Caco-2 (cell line): ENCODE measurements at regions of chr13 and their contacts with region 1.

Region 1: GRCh38 chr13:27953676-27954405 is 15.3 kb downstream of the CDX2 start:
- DNase-seq: peak; percentile 88 to 96
- H3K4me3 ChIP-seq: peak overlapping the region; percentile 56
- H3K4me3 Mint-ChIP-seq: peak overlapping the region; percentile 88
- H3K27ac Mint-ChIP-seq: peak overlapping the region; percentile 94
- H3K4me1 ChIP-seq: peaks cover 51% of the 10 kb centered on the region
- H3K4me1 Mint-ChIP-seq: peaks cover 13% of the 10 kb centered on the region
- H3K27me3 ChIP-seq: no peaks in the 10 kb centered on the region
- H3K27me3 Mint-ChIP-seq: no peaks in the 10 kb centered on the region
- CTCF ChIP-seq: peak; percentile 79 to 95

Region 2: GRCh38 chr13:27770809-27771208 is 183.0 kb before region 1 on chr13:
- CTCF ChIA-PET with region 1: interaction called, 11 read pairs
- POLR2A ChIA-PET with region 1: no interaction called
- intact Hi-C with region 1: loop called (anchors 1 kb)
- DNase-seq: peak; percentile 60 to 70
- H3K4me3 ChIP-seq: no peak overlapping the region
- H3K4me3 Mint-ChIP-seq: no peak overlapping the region
- H3K27ac Mint-ChIP-seq: no peak overlapping the region
- H3K4me1 ChIP-seq: no peaks in the 10 kb centered on the region
- H3K4me1 Mint-ChIP-seq: peaks cover 7% of the 10 kb centered on the region
- H3K27me3 ChIP-seq: no peaks in the 10 kb centered on the region
- H3K27me3 Mint-ChIP-seq: peaks cover 2% of the 10 kb centered on the region
- CTCF ChIP-seq: peak; percentile 69 to 85

Region 3: GRCh38 chr13:27868641-27869435 is 85.0 kb before region 1 on chr13:
- CTCF ChIA-PET with region 1: interaction called, 49 read pairs
- POLR2A ChIA-PET with region 1: interaction called, 17 read pairs
- intact Hi-C with region 1: loop called (anchors 1 kb)
- DNase-seq: no peak
- H3K4me3 ChIP-seq: peak overlapping the region; percentile 15; the same call in 1 of the 2 replicates
- H3K4me3 Mint-ChIP-seq: peak overlapping the region; percentile 57
- H3K27ac Mint-ChIP-seq: peak overlapping the region; percentile 86
- H3K4me1 ChIP-seq: peaks cover 35% of the 10 kb centered on the region
- H3K4me1 Mint-ChIP-seq: peaks cover 24% of the 10 kb centered on the region
- H3K27me3 ChIP-seq: no peaks in the 10 kb centered on the region
- H3K27me3 Mint-ChIP-seq: no peaks in the 10 kb centered on the region
- CTCF ChIP-seq: peak; percentile 53 to 62

Region 4: DNA sequence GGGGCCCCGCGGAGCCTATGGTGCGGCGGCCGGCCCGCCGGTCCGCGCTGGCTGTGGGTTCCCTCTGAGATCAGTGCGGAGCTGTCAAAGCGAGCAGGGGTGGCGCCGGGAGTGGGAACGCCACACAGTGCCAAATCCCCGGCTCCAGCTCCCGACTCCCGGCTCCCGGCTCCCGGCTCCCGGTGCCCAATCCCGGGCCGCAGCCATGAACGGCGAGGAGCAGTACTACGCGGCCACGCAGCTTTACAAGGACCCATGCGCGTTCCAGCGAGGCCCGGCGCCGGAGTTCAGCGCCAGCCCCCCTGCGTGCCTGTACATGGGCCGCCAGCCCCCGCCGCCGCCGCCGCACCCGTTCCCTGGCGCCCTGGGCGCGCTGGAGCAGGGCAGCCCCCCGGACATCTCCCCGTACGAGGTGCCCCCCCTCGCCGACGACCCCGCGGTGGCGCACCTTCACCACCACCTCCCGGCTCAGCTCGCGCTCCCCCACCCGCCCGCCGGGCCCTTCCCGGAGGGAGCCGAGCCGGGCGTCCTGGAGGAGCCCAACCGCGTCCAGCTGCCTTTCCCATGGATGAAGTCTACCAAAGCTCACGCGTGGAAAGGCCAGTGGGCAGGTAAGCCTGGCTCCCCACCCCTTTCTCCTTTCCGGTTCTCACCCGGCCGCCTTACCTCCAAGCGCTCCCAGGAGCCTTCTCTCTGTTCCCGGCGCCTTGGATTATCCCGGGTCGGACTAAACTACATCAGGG is 33.7 kb before region 1 on chr13 and contains the start of gene PDX1:
- CTCF ChIA-PET with region 1: interaction called, 26 read pairs
- POLR2A ChIA-PET with region 1: interaction called, 4 read pairs
- intact Hi-C with region 1: loop called (anchors 1 kb)
- DNase-seq: peak; percentile 86 to 89
- H3K4me3 ChIP-seq: peak within 1 kb of the TSS; percentile 83
- H3K4me3 Mint-ChIP-seq: peak within 1 kb of the TSS; percentile 96
- H3K27ac Mint-ChIP-seq: peak within 1 kb of the TSS; percentile 68
- H3K4me1 ChIP-seq: peaks cover 25% of the 10 kb centered on the region
- H3K4me1 Mint-ChIP-seq: peaks cover 8% of the 10 kb centered on the region
- H3K27me3 ChIP-seq: no peaks in the 10 kb centered on the region
- H3K27me3 Mint-ChIP-seq: no peaks in the 10 kb centered on the region
- CTCF ChIP-seq: no peak
- total RNA-seq, gene PDX1: 3.7 and 3.9 TPM in 2 replicates

Region 5: GRCh38 chr13:27968316-27969081 is 14.7 kb after region 1 on chr13:
- CTCF ChIA-PET with region 1: interaction called, 41 read pairs
- POLR2A ChIA-PET with region 1: interaction called, 5 read pairs
- intact Hi-C with region 1: no loop called
- DNase-seq: peak in 1 of 2 experiments; percentile 71
- H3K4me3 ChIP-seq: peak overlapping the region; percentile 96
- H3K4me3 Mint-ChIP-seq: peak overlapping the region; percentile 99
- H3K27ac Mint-ChIP-seq: peak overlapping the region; percentile 65
- H3K4me1 ChIP-seq: peaks cover 47% of the 10 kb centered on the region
- H3K4me1 Mint-ChIP-seq: peaks cover 10% of the 10 kb centered on the region
- H3K27me3 ChIP-seq: no peaks in the 10 kb centered on the region
- H3K27me3 Mint-ChIP-seq: no peaks in the 10 kb centered on the region
- CTCF ChIP-seq: peak in 1 of 2 experiments; percentile 27

Region 6: DNA sequence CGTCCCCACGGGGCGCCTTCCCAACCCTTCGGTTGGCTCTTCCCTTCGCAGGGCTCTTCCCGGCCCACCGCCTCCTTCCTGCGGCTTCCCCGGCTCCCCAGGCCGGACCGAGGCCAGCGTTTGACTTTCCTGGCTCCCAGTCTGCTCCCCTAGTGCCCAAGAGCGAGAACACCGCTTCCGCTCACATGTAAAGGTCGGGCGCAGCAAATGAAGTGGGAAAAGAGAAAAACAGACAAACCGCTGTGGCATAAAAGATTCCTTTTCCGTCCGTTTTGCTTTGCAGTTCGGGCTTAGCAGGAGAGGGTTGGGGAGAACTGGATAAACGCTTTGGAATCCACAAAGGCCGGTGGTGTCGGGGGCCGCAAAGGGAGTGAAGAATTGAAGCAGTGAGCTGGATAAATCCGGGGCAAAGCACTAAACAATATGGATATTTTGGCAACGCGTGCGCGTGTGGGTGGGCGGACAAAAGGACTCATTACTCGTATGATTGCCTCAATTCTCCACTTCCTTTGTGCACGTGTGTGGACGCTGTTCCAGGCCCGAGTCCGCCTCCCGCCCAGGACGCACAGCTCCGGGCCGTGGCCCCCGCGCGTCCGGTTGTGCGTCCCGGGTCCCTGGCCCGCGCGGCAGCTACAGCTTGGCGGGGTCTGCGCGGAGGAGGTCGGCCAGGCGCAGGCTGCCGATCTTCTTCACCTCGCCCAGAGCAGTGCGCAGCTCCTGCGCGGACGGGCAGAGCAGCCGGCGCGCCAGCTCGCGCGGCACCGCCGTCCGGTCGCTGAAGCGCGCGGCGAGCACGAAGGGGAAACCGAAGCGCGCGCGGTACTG is 23.8 kb after region 1 on chr13:
- CTCF ChIA-PET with region 1: interaction called, 10 read pairs
- POLR2A ChIA-PET with region 1: interaction called, 5 read pairs
- intact Hi-C with region 1: no loop called
- DNase-seq: peak in 1 of 2 experiments; percentile 43
- H3K4me3 ChIP-seq: peak overlapping the region; percentile 85
- H3K4me3 Mint-ChIP-seq: peak overlapping the region; percentile 82
- H3K27ac Mint-ChIP-seq: peak overlapping the region; percentile 10
- H3K4me1 ChIP-seq: peaks cover 43% of the 10 kb centered on the region
- H3K4me1 Mint-ChIP-seq: peaks cover 32% of the 10 kb centered on the region
- H3K27me3 ChIP-seq: no peaks in the 10 kb centered on the region
- H3K27me3 Mint-ChIP-seq: no peaks in the 10 kb centered on the region
- CTCF ChIP-seq: peak; percentile 25 to 34

Region 7: DNA sequence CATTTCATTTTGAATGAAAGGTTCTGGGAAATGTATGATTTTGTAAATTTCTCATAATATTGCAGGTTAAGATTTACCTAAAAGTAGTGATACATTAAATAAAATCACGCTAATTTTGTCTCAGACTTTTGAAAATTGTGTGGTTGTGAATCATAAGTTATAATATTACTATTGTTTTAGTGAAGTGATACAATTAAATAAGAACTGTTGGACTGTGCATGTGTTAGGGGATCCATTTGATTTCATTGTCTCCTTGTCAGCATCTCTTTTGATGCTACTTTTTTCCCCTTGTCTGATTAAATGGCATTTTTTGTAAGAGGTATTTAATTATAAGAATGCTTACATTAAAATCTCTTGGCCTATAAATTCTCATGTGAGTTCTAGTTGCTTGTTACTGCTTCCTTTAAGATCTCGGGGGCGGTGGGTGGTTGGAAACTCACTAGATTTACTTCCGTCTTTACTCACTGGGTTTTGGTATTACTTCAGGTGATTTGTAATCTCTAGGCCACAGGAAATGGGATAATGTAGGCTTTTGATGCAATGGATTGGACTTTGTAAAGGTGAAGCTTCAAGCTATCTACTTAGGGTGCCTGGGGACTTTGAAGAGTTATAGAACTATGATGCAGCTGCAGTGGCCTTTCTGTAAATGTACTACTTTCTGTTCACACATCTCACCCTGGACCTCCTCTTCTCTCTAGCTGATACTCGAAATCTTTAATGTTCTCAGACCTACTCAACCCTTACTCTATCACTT is 251.0 kb after region 1 on chr13:
- CTCF ChIA-PET with region 1: no interaction called
- POLR2A ChIA-PET with region 1: no interaction called
- intact Hi-C with region 1: no loop called
- DNase-seq: no peak
- H3K4me3 ChIP-seq: no peak overlapping the region
- H3K4me3 Mint-ChIP-seq: no peak overlapping the region
- H3K27ac Mint-ChIP-seq: no peak overlapping the region
- H3K4me1 ChIP-seq: 0 out of 2 replicates have a peak, but pooled peaks cover 3% of the 10 kb centered on the region
- H3K4me1 Mint-ChIP-seq: peaks cover 7% of the 10 kb centered on the region
- H3K27me3 ChIP-seq: no peaks in the 10 kb centered on the region
- H3K27me3 Mint-ChIP-seq: no peaks in the 10 kb centered on the region
- CTCF ChIP-seq: no peak